Activated CD4-positive, alpha-beta memory T cell treated with anti-CD3 and anti-CD28 coated beads for 36 hours (primary cell): ENCODE measurements at regions of chr7 and their contacts with region 1.

Region 1: GRCh38 chr7:22361795-22362194 is 4.8 kb upstream of the RAPGEF5 start:
- DNase-seq: no peak
- H3K4me3 Mint-ChIP-seq: no peak overlapping the region
- H3K27ac Mint-ChIP-seq: no peak overlapping the region
- H3K4me1 Mint-ChIP-seq: peaks cover 3% of the 10 kb centered on the region
- H3K27me3 Mint-ChIP-seq: peaks cover 12% of the 10 kb centered on the region

Region 2: GRCh38 chr7:21639206-21639856 is 722.5 kb before region 1 on chr7:
- CTCF ChIA-PET with region 1: no interaction called
- POLR2A ChIA-PET with region 1: no interaction called
- intact Hi-C with region 1: no loop called
- DNase-seq: no peak
- H3K4me3 Mint-ChIP-seq: no peak overlapping the region
- H3K27ac Mint-ChIP-seq: no peak overlapping the region
- H3K4me1 Mint-ChIP-seq: no peaks in the 10 kb centered on the region
- H3K27me3 Mint-ChIP-seq: peaks cover 12% of the 10 kb centered on the region

Region 3: DNA sequence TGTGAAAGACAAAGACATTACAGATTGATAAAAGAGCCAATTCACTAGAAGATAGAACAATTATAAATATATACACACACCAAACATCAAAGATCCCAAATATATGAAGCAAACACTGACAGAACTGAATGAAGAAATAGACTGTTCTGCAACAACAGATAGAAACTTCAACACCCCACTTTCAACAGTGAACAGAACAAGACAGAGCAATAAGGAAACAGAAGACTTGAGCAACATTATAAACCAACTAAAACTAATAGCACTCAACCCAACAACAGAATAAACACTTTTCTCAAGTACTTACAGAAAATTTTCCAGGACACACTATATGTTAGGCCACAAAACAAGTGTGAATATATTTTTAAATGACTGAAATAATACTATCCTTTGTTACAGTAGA is 427.0 kb before region 1 on chr7:
- CTCF ChIA-PET with region 1: no interaction called
- POLR2A ChIA-PET with region 1: no interaction called
- intact Hi-C with region 1: no loop called
- DNase-seq: no peak
- H3K4me3 Mint-ChIP-seq: no peak overlapping the region
- H3K27ac Mint-ChIP-seq: no peak overlapping the region
- H3K4me1 Mint-ChIP-seq: peaks cover 30% of the 10 kb centered on the region
- H3K27me3 Mint-ChIP-seq: peaks cover 4% of the 10 kb centered on the region

Region 4: DNA sequence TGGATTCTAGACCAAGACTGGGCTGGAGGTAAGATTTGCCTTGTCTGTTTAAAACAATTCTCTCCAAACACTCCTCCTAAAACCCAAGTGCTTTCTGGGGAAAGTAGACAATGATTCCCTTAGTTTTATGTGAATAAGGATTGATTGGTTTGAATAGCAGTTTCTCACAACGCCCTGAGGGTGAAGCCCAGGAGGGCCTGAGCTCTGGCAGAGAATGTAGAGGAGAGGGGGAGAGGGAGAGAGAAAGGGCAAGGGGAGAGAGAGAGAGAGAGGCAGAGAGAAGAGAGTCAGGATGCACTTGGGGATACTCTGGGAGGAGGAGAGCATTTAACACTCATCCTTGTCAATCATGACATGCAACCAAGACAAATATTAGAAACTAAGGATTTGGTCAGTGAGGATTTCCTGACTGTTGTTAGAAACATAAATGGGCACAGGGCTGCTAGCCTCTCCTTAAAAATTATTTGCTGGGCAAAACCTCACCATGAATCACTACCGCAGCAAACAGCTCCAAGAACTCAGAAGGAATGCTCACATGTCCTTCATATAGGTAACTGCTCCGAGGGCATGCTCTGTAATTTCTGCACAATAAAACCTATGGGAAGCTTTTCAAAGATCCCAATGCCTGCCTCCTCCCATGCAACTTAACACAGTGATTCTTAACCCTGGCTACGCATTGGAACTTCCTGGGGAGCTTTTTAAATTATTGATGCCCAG is 50.3 kb after region 1 on chr7:
- CTCF ChIA-PET with region 1: no interaction called
- POLR2A ChIA-PET with region 1: no interaction called
- intact Hi-C with region 1: loop called (anchors 1 kb)
- DNase-seq: no peak
- H3K4me3 Mint-ChIP-seq: no peak overlapping the region
- H3K27ac Mint-ChIP-seq: no peak overlapping the region
- H3K4me1 Mint-ChIP-seq: no peaks in the 10 kb centered on the region
- H3K27me3 Mint-ChIP-seq: no peaks in the 10 kb centered on the region

Region 5: GRCh38 chr7:22640269-22640668 is 278.5 kb after region 1 on chr7:
- CTCF ChIA-PET with region 1: no interaction called
- POLR2A ChIA-PET with region 1: no interaction called
- intact Hi-C with region 1: no loop called
- DNase-seq: peak; percentile 78
- H3K4me3 Mint-ChIP-seq: no peak overlapping the region
- H3K27ac Mint-ChIP-seq: no peak overlapping the region
- H3K4me1 Mint-ChIP-seq: peaks cover 20% of the 10 kb centered on the region
- H3K27me3 Mint-ChIP-seq: peaks cover 26% of the 10 kb centered on the region